GM13976 (cell line): ENCODE measurements at regions of chr20 and their contacts with region 1.

Region 1: DNA sequence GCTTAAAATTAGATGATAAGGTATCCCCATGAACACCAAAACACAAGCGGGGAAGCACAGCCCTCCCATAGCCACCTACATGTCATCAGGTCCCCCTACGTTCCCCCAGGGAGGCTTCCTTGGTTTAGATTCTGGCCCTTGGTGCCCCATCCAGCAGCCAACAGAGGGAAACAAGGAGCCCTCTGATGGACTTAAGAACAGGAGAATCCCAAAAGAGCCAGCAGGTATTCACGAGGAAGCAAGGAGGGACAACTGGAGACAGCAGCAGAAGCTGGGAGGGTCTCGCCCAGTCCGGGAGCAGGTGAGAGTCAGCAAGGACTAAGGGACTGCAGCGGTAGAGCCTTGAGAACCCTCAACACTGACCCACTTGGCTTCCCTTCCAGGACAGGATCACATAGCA is 58.4 kb upstream of the TOP1 start:
- DNase-seq: no peak
- CTCF ChIP-seq: no peak

Region 2: DNA sequence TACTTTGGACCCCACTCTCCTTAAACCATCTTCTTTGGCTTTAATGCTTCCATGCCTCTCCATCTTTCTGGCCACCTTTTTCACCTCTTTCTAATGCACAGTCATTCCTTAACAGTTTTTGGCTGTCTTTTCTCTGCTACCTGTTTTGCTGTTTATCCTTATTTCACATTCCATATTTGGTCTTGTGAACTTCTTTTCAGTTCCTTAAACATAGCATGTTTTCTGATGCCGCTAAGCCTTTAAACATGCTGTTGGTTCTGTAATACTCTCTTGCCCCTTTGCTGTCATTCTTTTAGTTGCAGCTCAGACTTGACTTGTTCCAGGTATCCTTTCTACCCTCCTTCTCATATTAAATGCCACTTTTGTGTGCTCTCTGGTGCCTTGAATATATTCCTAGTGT is 94.2 kb after region 1 on chr20:
- in situ Hi-C with region 1: loop called (anchors 10 kb)
- DNase-seq: peak; percentile 61
- CTCF ChIP-seq: peak; percentile 23

Region 3: DNA sequence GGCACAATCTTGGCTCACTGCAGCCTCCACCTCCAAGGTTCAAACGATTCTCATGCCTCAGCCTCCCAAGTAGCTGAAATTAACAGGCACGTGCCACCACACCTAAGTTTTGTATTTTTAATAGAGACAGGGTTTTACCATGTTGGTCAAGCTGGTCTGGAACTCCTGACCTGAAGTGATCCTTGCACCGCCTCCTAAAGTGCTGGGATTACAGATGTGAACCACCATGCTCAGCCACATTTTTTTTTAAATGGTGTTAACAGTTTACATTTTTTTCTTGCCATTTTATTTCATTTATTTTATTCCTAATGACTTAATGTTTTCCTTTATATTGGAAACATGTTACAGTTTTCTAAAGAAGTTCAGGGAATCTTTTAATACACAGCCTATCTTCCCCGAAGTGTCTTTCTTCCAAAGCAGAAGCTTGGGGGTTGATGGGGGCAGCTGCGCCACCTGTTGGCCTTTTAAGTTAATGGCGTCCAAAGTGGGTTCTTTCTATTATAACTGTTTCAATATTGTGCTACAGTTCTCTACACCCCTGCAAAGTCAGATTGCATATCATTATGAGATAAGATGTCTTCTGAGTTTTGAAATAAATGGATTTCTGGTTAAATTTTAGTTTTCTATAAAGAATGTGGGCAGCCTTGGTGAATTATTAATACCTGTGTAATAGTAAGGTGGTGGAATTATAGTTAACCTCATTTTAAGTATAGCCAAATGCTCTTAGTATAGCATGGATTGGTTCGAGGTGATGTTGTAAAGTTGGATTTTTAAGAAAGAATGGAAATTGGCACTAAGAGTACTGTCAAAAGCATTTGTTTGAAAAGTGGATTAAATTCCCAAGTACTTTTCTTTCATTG is 125.1 kb after region 1 on chr20:
- in situ Hi-C with region 1: loop called (anchors 10 kb)
- DNase-seq: peak; percentile 55
- CTCF ChIP-seq: peak; percentile 66

Region 4: GRCh38 chr20:41339507-41340326 is 369.5 kb after region 1 on chr20:
- in situ Hi-C with region 1: loop called (anchors 10 kb)
- DNase-seq: peak; percentile 91
- CTCF ChIP-seq: peak; percentile 96